Activated CD4-positive, alpha-beta T cell treated with anti-CD3 and anti-CD28 coated beads, Interleukin-2, amount 10 ng/mL, durations not matched to agents 24 days and 14 days (primary cell): ENCODE measurements at regions of chrX and their contacts with region 1.

Region 1: GRCh38 chrX:13653022-13653693 is at the start of gene TCEANC:
- DNase-seq: peak; percentile 97
- H3K4me3 Mint-ChIP-seq: peak within 1 kb of the TSS; percentile 90
- H3K27ac Mint-ChIP-seq: peak within 1 kb of the TSS; percentile 94
- H3K4me1 Mint-ChIP-seq: peaks cover 13% of the 10 kb centered on the region
- H3K27me3 Mint-ChIP-seq: no peaks in the 10 kb centered on the region
- total RNA-seq, gene TCEANC: 3.0 and 4.2 TPM in 2 replicates

Region 2: GRCh38 chrX:13569479-13570260 is 83.5 kb before region 1 on chrX and contains the start of gene EGFL6:
- intact Hi-C with region 1: loop called (anchors 5 kb)
- DNase-seq: peak; percentile 60
- H3K4me3 Mint-ChIP-seq: peak within 1 kb of the TSS; percentile 67
- H3K27ac Mint-ChIP-seq: no peak within 1 kb of the TSS
- H3K4me1 Mint-ChIP-seq: peaks cover 16% of the 10 kb centered on the region
- H3K27me3 Mint-ChIP-seq: peaks cover 13% of the 10 kb centered on the region
- total RNA-seq, gene EGFL6: 1.7 and 2.2 TPM in 2 replicates

Region 3: DNA sequence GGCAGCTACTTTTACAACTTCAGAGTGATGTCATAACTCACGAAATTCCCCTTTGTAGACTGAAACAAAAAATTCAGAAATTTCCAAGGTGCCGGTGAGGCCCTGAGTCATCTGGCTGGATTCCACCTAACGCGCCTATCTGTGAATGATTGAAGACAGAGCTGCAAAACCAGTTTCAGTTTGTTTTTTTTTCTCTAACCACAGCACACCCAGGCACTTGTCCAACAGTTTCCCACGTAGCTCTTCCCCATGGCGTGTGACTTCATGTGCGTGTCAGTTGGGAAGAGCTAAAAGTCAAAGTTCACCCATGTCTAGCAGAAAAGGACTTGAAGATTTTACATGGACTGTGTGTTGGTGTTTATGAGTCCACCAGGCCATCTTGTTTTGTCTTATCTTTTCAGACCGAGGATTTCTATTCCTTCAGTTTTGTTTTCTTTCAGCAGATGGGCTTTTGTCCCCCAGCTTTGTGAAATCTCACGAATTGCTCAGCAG is 16.1 kb after region 1 on chrX:
- intact Hi-C with region 1: loop called (anchors 2 kb)
- DNase-seq: peak; percentile 75
- H3K4me3 Mint-ChIP-seq: peak overlapping the region; percentile 63
- H3K27ac Mint-ChIP-seq: peak overlapping the region; percentile 93
- H3K4me1 Mint-ChIP-seq: peaks cover 11% of the 10 kb centered on the region
- H3K27me3 Mint-ChIP-seq: no peaks in the 10 kb centered on the region

Region 4: GRCh38 chrX:13681595-13681994 is 28.4 kb after region 1 on chrX:
- intact Hi-C with region 1: no loop called
- DNase-seq: no peak
- H3K4me3 Mint-ChIP-seq: no peak overlapping the region
- H3K27ac Mint-ChIP-seq: no peak overlapping the region
- H3K4me1 Mint-ChIP-seq: peaks cover 5% of the 10 kb centered on the region
- H3K27me3 Mint-ChIP-seq: no peaks in the 10 kb centered on the region

Region 5: GRCh38 chrX:13742397-13743176 is 89.4 kb after region 1 on chrX:
- intact Hi-C with region 1: loop called (anchors 2 kb)
- DNase-seq: peak; percentile 73
- H3K4me3 Mint-ChIP-seq: peak overlapping the region; percentile 49
- H3K27ac Mint-ChIP-seq: peak overlapping the region; percentile 77
- H3K4me1 Mint-ChIP-seq: peaks cover 17% of the 10 kb centered on the region
- H3K27me3 Mint-ChIP-seq: no peaks in the 10 kb centered on the region